ENCODE measurements at regions of chr1 and their contacts with region 1.

Region 1: GRCh38 chr1:25549273-25550154 is 6.1 kb downstream of the LDLRAP1 start:
- DNase-seq: peak; percentile 90
- ATAC-seq: peak; percentile 94
- H3K4me3 Mint-ChIP-seq: peak overlapping the region; percentile 55
- H3K27ac Mint-ChIP-seq: peak overlapping the region; percentile 89
- H3K4me1 Mint-ChIP-seq: peaks cover 84% of the 10 kb centered on the region
- H3K27me3 Mint-ChIP-seq: no peaks in the 10 kb centered on the region

Region 2: DNA sequence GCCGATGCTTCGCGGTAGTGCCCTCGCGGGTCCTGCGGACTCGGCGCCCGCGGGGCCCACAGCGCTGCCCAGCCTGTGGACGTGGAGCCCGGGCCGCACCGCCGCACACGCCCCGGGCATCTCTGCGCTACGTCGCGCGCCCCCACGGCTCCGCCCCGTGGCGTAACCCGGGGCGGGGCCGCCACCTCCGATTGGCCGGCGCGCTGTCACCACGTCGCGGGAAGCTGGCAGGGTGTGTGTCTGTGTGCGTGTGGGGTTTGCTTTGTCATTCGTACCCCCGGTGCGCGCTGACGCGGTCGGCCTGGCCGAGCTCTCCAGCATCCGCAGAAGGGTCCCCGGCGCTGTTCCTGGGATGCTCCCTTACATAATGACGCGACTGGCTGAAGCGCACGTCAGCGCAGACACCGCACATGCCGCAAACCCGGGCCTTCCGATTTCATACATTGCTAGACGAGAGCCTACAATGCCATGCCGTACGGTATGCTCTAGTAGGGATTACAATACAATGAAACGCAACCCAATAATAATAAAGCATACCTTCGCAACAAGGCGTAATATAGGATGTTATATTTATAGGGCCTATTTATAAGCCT is 119.3 kb before region 1 on chr1:
- CTCF ChIA-PET with region 1: no interaction called
- POLR2A ChIA-PET with region 1: no interaction called
- DNase-seq: peak; percentile 88
- ATAC-seq: peak; percentile 88
- H3K4me3 Mint-ChIP-seq: peak overlapping the region; percentile 98
- H3K27ac Mint-ChIP-seq: peak overlapping the region; percentile 99
- H3K4me1 Mint-ChIP-seq: peaks cover 40% of the 10 kb centered on the region
- H3K27me3 Mint-ChIP-seq: no peaks in the 10 kb centered on the region

Region 3: DNA sequence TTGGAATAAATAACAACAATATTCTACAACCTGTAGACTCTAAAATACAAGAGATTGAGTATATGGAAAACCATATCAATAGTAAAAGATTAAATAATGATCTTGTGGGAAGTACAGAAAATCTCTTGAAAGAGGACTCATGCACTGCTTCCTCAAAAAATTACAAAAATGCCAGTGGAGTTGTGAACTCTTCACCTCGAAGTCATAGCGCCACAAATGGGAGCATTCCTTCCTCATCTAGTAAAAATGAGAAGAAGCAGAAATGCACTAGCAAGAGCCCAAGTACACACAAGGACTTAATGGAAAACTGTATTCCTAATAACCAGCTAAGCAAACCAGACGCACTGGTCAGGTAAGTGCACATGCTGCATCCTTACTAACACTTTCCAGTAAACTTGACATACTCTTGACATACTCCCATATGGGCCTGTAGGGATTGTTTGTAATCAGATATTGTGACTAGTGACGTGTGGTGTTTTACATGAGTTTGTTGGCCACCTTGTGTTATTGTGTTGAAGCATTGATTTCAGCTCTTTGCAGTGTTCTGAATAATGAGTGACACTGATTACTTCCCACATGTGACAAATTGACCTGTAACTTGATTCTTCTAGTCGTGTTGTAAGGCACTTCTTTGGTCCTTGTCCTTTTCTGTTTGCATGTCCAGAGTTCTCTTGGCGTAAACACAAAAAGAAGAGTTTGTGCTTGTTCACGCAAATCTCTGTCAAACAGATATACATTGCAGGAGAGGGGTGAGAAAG is 90.8 kb before region 1 on chr1:
- CTCF ChIA-PET with region 1: no interaction called
- POLR2A ChIA-PET with region 1: no interaction called
- DNase-seq: no peak
- ATAC-seq: no peak
- H3K4me3 Mint-ChIP-seq: no peak overlapping the region
- H3K27ac Mint-ChIP-seq: no peak overlapping the region
- H3K4me1 Mint-ChIP-seq: peaks cover 7% of the 10 kb centered on the region
- H3K27me3 Mint-ChIP-seq: no peaks in the 10 kb centered on the region

Region 4: GRCh38 chr1:25529518-25530185 is 19.9 kb before region 1 on chr1:
- CTCF ChIA-PET with region 1: no interaction called
- POLR2A ChIA-PET with region 1: no interaction called
- DNase-seq: no peak
- ATAC-seq: no peak
- H3K4me3 Mint-ChIP-seq: no peak overlapping the region
- H3K27ac Mint-ChIP-seq: no peak overlapping the region
- H3K4me1 Mint-ChIP-seq: peaks cover 3% of the 10 kb centered on the region
- H3K27me3 Mint-ChIP-seq: no peaks in the 10 kb centered on the region

Region 5: GRCh38 chr1:25566730-25567341 is 17.3 kb after region 1 on chr1:
- CTCF ChIA-PET with region 1: interaction called, 19 read pairs
- POLR2A ChIA-PET with region 1: interaction called, 10 read pairs
- DNase-seq: peak; percentile 63
- ATAC-seq: no peak
- H3K4me3 Mint-ChIP-seq: peak overlapping the region; percentile 58
- H3K27ac Mint-ChIP-seq: peak overlapping the region; percentile 84
- H3K4me1 Mint-ChIP-seq: peaks cover 75% of the 10 kb centered on the region
- H3K27me3 Mint-ChIP-seq: no peaks in the 10 kb centered on the region

Region 6: DNA sequence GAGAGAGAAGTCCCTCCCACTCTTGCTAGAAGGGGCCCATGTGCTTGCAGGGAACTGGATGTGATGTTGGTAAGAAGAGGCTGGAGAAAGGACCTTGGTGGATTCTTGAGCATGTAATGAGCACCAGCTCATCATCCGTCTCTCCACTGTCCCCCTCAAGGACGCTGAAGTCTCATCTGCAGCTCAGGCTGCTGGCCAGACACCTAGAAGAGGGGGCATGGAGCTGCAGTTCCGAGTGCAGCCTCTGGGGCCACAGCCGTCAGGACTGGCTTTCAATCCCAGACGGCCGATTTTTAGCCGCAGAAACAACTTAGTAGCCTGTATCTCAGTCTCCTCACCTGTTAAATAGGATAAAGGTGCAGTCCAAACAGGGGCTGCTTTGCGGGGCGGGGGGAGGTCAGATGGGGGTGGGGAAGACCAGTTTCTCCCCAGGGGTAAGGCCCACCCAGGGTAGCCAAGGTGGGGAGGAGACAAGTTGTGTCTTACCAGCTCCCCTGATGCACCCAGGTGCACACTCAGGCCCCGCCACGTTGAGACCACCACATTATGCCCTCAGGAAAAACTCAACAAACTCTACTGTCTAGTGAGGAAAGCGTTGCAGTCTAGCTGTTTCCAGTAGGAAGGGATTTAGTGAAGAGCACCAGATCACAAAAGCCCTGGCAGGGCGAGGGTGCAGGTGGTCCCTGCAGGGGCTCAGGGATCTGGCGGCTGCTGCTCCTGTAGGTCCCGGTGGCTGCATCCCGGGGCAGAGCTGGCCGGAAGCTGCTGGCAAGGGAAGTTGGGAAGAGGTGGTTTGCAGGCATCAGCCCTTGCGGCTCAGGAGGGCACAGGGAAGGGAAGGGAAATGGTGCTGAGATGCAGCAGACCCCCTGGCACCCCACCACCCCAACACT is 23.4 kb after region 1 on chr1:
- CTCF ChIA-PET with region 1: interaction called, 19 read pairs
- POLR2A ChIA-PET with region 1: no interaction called
- DNase-seq: peak; percentile 67
- ATAC-seq: peak; percentile 72
- H3K4me3 Mint-ChIP-seq: no peak overlapping the region
- H3K27ac Mint-ChIP-seq: no peak overlapping the region
- H3K4me1 Mint-ChIP-seq: peaks cover 22% of the 10 kb centered on the region
- H3K27me3 Mint-ChIP-seq: no peaks in the 10 kb centered on the region

Region 7: GRCh38 chr1:25661036-25661815 is 111.7 kb after region 1 on chr1:
- CTCF ChIA-PET with region 1: no interaction called
- POLR2A ChIA-PET with region 1: no interaction called
- DNase-seq: no peak
- ATAC-seq: no peak
- H3K4me3 Mint-ChIP-seq: no peak overlapping the region
- H3K27ac Mint-ChIP-seq: no peak overlapping the region
- H3K4me1 Mint-ChIP-seq: peaks cover 15% of the 10 kb centered on the region
- H3K27me3 Mint-ChIP-seq: peaks cover 1% of the 10 kb centered on the region